Endothelial cell of umbilical vein (primary cell): ENCODE measurements at regions of chr4 and their contacts with region 1.

Region 1: DNA sequence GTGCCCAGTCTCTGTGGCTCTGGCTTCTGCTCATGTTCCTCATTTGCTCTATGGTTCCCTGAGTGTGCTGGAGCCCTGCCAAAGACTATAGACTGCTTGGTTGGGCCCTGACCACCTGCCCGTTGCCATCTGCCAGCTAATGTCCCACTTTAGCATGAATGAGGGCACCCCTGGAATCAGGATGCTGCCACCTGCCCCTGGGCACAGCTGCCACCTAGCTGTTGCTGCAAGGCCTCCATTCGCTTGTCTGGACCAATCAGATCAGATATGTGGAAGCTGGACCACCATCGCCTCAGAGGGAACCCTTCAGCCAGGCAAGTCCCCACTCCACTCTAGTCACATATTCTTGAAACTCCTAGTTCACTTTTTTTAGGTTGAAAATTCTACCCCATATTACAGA is 45.9 kb downstream of the TTC29 start:
- DNase-seq: no peak
- H3K4me3 ChIP-seq: no peak overlapping the region
- H3K27ac ChIP-seq: no peak overlapping the region
- H3K4me1 ChIP-seq: no peaks in the 10 kb centered on the region
- H3K27me3 ChIP-seq: peaks cover 3 to 10% of the 10 kb centered on the region in 2 experiments
- CTCF ChIP-seq: no peak
- POLR2A ChIP-seq: no peak

Region 2: DNA sequence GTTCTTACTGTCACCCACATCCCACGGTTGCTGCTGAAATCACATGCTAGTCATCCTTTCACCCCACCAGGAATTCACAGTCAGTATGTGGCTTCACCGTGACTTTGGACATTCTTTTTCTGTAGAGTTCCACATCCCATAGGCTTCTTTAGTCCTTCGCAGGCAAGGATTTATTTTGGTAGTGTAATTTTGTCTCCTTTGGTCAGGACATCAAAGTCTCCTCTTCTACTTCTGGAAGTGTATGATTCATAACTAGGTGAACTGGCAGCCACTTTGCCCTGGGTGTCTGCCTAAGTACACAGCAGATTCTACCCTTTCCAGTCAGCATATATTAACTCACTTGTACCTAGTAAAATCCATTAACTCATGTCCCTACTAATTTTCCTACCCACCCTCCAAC is 1318.8 kb before region 1 on chr4:
- CTCF ChIA-PET with region 1: no interaction called
- POLR2A ChIA-PET with region 1: no interaction called
- dilution Hi-C with region 1: no loop called
- intact Hi-C with region 1: loop called (anchors 5 kb)
- DNase-seq: no peak
- H3K4me3 ChIP-seq: no peak overlapping the region
- H3K27ac ChIP-seq: no peak overlapping the region
- H3K4me1 ChIP-seq: no peaks in the 10 kb centered on the region
- H3K27me3 ChIP-seq: peaks cover 7 to 29% of the 10 kb centered on the region in 2 experiments
- CTCF ChIP-seq: no peak
- POLR2A ChIP-seq: no peak

Region 3: GRCh38 chr4:146883070-146883469 is 16.7 kb before region 1 on chr4:
- CTCF ChIA-PET with region 1: no interaction called
- POLR2A ChIA-PET with region 1: no interaction called
- dilution Hi-C with region 1: no loop called
- intact Hi-C with region 1: no loop called
- DNase-seq: no peak
- H3K4me3 ChIP-seq: no peak overlapping the region
- H3K27ac ChIP-seq: no peak overlapping the region
- H3K4me1 ChIP-seq: no peaks in the 10 kb centered on the region
- H3K27me3 ChIP-seq: peaks cover 2 to 4% of the 10 kb centered on the region in 2 experiments
- CTCF ChIP-seq: no peak
- POLR2A ChIP-seq: no peak